Sigmoid colon (tissue), 7 donors: ENCODE measurements at regions of chr16 and their contacts with region 1.

Region 1: DNA sequence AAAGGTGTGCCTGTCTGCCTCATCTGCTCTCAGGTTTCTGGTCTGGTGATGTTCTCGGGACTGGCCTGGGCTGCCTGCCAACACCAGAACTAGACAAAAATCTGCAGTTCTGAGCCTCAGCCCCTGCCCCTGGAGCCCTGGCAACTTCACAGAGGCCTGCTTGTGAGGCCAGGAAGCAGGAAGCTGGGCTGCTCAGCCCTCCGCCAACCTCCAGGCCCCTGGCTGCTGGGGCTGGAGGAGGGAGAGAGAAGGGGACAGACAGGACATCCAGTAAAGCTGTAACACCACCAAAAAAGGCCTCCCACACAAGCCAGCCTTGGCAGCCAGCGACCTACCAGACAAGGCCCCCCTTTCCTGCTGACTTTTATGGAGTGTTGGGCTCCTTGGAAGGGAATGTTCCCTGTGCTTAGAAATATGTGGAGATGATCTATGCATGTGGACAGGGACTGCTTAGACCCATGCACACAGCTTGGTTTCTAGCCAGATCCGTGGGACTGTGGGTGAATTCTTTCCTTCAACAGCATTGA is 157.6 kb downstream of the XYLT1 start:
- DNase-seq: peak; percentile 98
- H3K4me3 ChIP-seq: no peak overlapping the region
- H3K27ac ChIP-seq: peak overlapping the region; percentile 89 to 97 (median 96)
- H3K4me1 ChIP-seq: peaks cover 0 to 86% (median 81%) of the 10 kb centered on the region in 4 donors
- H3K27me3 ChIP-seq: no peaks in the 10 kb centered on the region
- CTCF ChIP-seq: no peak
- EP300 ChIP-seq: peak; percentile 99 to 100 (median 100)
- POLR2A ChIP-seq: peak in 1 of 2 donors; percentile 46

Region 2: DNA sequence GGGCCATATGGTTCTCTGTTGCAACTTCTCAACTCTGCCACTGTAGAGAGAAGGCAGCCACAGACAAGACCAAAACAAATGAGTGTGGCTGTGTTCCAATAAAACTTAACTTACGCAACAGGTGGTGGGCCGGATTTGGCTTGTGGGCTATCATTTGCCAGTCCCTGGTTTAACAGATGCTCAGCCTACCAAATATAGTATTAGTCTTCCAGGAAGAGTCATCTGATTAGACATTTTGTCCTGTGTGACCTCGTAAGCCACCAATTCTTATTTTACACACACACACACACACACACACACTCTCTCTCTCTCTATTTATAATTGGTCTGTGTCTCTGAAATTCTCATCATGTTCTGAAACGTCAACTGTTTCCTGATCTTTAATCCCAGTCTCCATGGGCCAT is 88.3 kb before region 1 on chr16:
- intact Hi-C with region 1: loop called (anchors 2 kb)
- DNase-seq: peak; percentile 89
- H3K4me3 ChIP-seq: no peak overlapping the region
- H3K27ac ChIP-seq: peak overlapping the region; percentile 76 to 88 (median 84)
- H3K4me1 ChIP-seq: peaks cover 0 to 50% (median 47%) of the 10 kb centered on the region in 4 donors
- H3K27me3 ChIP-seq: no peaks in the 10 kb centered on the region
- CTCF ChIP-seq: no peak
- EP300 ChIP-seq: peak; percentile 62 to 89 (median 70)
- POLR2A ChIP-seq: no peak

Region 3: DNA sequence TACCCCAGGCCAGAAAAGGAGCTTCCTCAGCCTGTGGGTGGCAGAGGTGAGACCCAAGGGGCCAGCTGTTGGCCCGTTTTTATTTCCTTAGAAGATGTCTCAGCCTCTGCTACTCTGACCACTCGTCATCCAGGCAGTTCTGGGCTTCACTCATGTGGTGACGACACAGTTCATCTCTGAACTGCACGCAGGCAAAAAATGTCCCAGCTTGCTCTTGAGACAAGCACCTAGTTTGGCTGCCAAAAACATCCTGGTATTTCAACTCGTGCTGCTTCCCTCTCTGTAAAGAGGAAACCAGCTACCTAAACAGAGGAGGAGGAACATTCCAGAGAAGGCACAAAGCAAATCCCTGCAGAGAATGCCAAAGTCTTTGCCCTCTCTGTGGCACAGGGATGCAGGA is 31.9 kb after region 1 on chr16:
- intact Hi-C with region 1: loop called (anchors 1 kb)
- DNase-seq: peak; percentile 96
- H3K4me3 ChIP-seq: no peak overlapping the region
- H3K27ac ChIP-seq: peak overlapping the region; percentile 82 to 92 (median 88)
- H3K4me1 ChIP-seq: peaks cover 0 to 78% (median 75%) of the 10 kb centered on the region in 4 donors
- H3K27me3 ChIP-seq: no peaks in the 10 kb centered on the region
- CTCF ChIP-seq: no peak
- EP300 ChIP-seq: peak; percentile 82 to 99 (median 88)
- POLR2A ChIP-seq: no peak

Region 4: DNA sequence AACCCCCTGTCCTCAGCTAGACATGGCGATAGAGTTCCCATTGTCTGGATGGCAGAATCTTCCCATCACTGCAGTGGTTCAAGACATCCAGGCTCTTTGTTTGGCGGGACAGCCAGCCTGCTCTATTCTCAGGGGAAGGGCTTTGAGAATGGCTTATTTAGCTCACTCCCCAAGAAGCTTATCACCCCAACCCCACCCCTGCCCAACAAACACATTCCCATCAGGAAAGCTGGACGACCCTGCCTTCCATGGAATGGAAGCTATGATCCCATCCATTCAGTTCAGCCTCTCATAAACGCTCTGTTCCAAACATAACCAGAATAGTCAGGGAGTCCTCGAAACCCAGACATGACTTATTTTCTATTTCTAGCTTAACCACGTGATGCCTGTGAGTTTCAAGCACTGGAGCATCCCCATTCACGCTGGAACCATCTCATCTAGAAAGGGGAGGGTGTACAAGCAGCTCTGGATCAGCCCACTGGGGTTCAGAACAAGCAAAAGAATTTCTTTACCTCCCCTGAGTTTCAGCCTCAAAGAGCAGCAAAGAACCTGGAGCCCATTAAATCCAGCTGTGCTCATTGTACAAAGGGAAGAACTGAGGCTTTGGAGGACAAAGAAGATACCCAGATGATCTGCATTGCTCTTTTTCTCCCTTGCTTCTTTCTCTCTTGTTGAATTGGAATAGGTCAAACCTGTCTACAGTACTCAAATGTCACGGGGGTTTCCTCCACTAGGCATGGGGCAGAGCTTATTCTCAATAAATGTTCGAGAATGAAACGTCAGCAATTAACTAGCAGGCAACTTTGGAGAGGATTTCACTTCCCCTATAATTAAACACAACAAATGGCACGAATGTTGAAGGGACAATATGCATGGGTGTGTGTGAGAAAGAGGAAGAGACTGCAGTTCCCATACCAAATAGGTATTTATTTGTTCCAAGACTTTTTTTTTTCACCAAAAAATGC is 64.5 kb after region 1 on chr16:
- intact Hi-C with region 1: loop called (anchors 2 kb)
- DNase-seq: no peak
- H3K4me3 ChIP-seq: no peak overlapping the region
- H3K27ac ChIP-seq: peak overlapping the region; percentile 86 to 97 (median 88)
- H3K4me1 ChIP-seq: peaks cover 0 to 73% (median 68%) of the 10 kb centered on the region in 4 donors
- H3K27me3 ChIP-seq: no peaks in the 10 kb centered on the region
- CTCF ChIP-seq: no peak
- EP300 ChIP-seq: peak in 1 of 4 donors; percentile 49
- POLR2A ChIP-seq: no peak

Region 5: GRCh38 chr16:17404941-17405689 is 92.0 kb after region 1 on chr16:
- intact Hi-C with region 1: loop called (anchors 2 kb)
- DNase-seq: peak; percentile 97
- H3K4me3 ChIP-seq: no peak overlapping the region
- H3K27ac ChIP-seq: peak overlapping the region; percentile 85 to 97 (median 92)
- H3K4me1 ChIP-seq: peaks cover 0 to 64% (median 52%) of the 10 kb centered on the region in 4 donors
- H3K27me3 ChIP-seq: no peaks in the 10 kb centered on the region
- CTCF ChIP-seq: no peak
- EP300 ChIP-seq: peak; percentile 62 to 93 (median 92)
- POLR2A ChIP-seq: no peak